ENCODE measurements at regions of chr2 and their contacts with region 1.

Region 1: GRCh38 chr2:43226558-43226954 is at the start of gene ZFP36L2:
- DNase-seq: peak; percentile 94 to 97 (median 96)
- H3K4me3 ChIP-seq: peak within 1 kb of the TSS; percentile 84 to 100 (median 97)
- H3K27ac ChIP-seq: peak within 1 kb of the TSS; percentile 61 to 91
- H3K4me1 ChIP-seq: peaks cover 22 to 29% (median 27%) of the 10 kb centered on the region in 4 experiments
- H3K27me3 ChIP-seq: no peaks in the 10 kb centered on the region

Region 2: DNA sequence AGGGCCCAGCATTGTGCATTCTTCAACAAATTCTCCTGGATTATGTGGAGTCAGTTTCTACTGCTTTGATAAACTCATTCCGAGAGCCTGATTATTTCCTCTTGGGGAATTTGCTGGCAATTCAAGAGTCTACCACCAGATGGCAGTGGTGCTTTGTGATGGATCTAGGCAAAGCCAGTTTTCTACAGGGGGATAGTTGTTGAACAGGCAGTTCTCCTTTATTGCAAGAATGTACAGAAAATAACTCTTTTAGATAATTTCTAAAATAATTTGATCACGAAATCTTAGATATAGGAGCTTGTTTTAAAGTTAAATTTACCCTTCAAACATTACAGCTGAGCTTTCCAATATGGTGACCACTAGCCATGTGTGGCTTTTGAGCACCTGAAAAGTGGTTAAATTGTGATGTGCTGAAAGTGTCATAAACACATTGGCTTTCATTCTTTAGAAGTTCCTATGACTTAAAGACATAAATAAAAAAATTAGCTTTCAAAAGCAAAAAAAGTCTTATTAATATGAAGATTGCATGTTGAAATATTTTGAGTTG is 367.5 kb before region 1 on chr2:
- CTCF ChIA-PET with region 1: interaction called, 41 read pairs
- POLR2A ChIA-PET with region 1: interaction called, 5 read pairs
- DNase-seq: peak; percentile 84 to 93 (median 89)
- H3K4me3 ChIP-seq: no peak overlapping the region
- H3K27ac ChIP-seq: no peak overlapping the region
- H3K4me1 ChIP-seq: peaks cover 2 to 57% (median 45%) of the 10 kb centered on the region in 4 experiments
- H3K27me3 ChIP-seq: no peaks in the 10 kb centered on the region

Region 3: DNA sequence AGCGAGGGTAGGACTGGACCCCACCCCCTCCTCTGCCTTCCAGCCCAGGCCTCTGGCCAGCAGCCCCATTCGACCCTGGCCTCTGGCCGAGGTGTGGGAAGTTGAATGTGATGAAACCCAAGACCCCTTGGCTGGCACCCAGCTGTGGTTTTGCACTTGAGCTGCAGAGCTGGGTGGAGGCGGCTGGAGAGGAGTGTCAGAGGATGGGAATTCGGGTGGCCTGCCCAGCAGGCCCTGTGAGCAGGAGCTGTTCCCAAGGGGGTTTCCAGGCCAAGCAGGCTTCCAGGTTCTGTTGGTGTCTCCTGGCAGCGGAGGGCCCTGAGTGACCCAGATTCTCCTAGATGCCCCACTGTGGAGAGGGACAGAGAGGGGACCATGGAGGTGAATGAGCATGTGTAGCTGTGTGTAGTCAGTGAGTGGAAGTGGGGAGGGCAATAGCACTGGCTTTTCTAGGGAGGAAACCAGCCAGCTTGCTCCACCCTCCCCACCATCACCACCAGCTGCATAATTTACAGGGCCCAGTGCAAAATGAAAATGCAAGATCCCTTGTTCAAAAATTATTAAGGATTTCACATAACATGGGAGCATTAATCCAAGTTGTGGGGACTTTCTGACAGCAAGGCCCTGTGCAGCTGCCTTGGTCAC is 262.0 kb before region 1 on chr2:
- CTCF ChIA-PET with region 1: interaction called, 25 read pairs
- POLR2A ChIA-PET with region 1: interaction called, 57 read pairs
- DNase-seq: peak in 2 of 3 donors; percentile 65 to 69
- H3K4me3 ChIP-seq: peak overlapping the region in 2 of 7 experiments; percentile 35 to 58
- H3K27ac ChIP-seq: peak overlapping the region; percentile 88 to 91
- H3K4me1 ChIP-seq: peaks cover 35 to 99% (median 95%) of the 10 kb centered on the region in 4 experiments
- H3K27me3 ChIP-seq: no peaks in the 10 kb centered on the region

Region 4: DNA sequence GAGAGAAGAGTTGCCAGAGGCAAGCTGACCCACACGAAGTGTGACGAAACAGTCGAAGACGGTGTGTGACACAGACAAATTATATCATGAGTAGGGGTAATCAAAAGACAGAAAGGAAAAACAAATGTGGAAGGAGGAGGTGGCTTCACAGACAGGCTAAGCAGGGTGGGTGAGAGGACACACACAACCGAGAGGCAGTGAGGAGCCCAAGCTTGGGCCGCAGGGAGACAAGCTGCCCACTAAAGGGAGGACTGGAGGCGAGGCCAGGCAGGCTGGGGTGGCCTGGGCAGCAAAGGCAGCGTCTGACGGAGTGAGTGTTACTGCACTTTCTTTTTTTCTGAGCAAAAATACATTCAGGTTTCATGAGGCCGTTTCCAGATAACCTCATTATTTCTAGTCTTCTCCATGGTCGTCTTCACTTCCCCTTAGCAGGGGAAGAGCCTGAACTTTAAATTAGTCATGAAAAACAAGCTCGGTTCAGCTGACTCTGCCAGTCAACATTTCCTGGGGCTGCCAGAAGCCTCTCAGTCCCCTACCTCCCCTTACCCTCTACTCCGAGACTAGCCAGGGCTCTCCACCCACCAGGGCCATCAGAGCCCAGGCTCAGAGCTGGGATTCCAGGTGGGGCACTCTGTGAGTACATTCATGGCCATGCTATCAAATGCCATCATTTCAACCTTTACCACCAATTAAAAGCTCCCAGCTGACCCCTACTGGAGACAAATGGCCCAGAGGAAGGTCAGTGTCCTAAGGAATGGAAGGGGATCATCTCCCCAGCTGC is 13.6 kb after region 1 on chr2:
- CTCF ChIA-PET with region 1: interaction called, 12 read pairs
- POLR2A ChIA-PET with region 1: interaction called, 6 read pairs
- DNase-seq: peak in 2 of 3 donors; percentile 60 to 65
- H3K4me3 ChIP-seq: peak overlapping the region in 1 of 7 experiments; percentile 19
- H3K27ac ChIP-seq: peak overlapping the region in 1 of 2 experiments; percentile 39
- H3K4me1 ChIP-seq: peaks cover 0 to 14% (median 13%) of the 10 kb centered on the region in 4 experiments
- H3K27me3 ChIP-seq: no peaks in the 10 kb centered on the region

Region 5: GRCh38 chr2:43542285-43542937 is 315.9 kb after region 1 on chr2:
- CTCF ChIA-PET with region 1: interaction called, 25 read pairs
- POLR2A ChIA-PET with region 1: interaction called, 11 read pairs
- DNase-seq: peak; percentile 68 to 85 (median 83)
- H3K4me3 ChIP-seq: no peak overlapping the region
- H3K27ac ChIP-seq: no peak overlapping the region
- H3K4me1 ChIP-seq: peaks cover 15 to 34% (median 22%) of the 10 kb centered on the region in 4 experiments
- H3K27me3 ChIP-seq: no peaks in the 10 kb centered on the region